PC-3 (cell line): ENCODE measurements at regions of chr5 and their contacts with region 1.

Region 1: DNA sequence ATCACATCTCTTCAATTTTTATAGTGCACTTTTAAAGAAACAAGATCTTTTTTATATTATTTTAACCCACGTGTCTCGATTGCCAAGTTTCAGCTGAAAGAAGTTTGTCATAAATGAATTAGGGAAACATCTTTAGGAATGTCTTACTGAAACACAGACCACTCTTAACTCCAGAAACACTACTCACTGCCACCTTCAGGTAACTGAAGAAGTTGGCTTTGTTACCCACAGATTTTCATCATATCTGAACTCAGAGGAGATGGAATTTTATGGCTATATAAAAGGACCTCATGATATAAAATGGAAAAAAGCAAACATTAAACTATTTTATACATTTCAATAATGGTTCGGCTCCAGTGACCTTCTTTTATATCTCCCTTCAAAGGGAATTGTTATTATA is 158.0 kb downstream of the SEMA5A start:
- DNase-seq: peak; percentile 64
- ATAC-seq: peak; percentile 93
- H3K4me3 ChIP-seq: no peak overlapping the region
- H3K27ac ChIP-seq: no peak overlapping the region
- H3K4me1 ChIP-seq: peaks cover under 1% of the 10 kb centered on the region; the same call in 1 of the 2 replicates
- H3K27me3 ChIP-seq: no peaks in the 10 kb centered on the region
- CTCF ChIP-seq: peak; percentile 67

Region 2: GRCh38 chr5:9099689-9100088 is 288.2 kb before region 1 on chr5:
- CTCF ChIA-PET with region 1: no interaction called
- POLR2A ChIA-PET with region 1: no interaction called
- intact Hi-C with region 1: no loop called
- DNase-seq: peak; percentile 35
- ATAC-seq: no peak
- H3K4me3 ChIP-seq: no peak overlapping the region
- H3K27ac ChIP-seq: no peak overlapping the region
- H3K4me1 ChIP-seq: no peaks in the 10 kb centered on the region
- H3K27me3 ChIP-seq: no peaks in the 10 kb centered on the region
- CTCF ChIP-seq: peak; percentile 51

Region 3: GRCh38 chr5:9156282-9156681 is 231.6 kb before region 1 on chr5:
- CTCF ChIA-PET with region 1: no interaction called
- POLR2A ChIA-PET with region 1: no interaction called
- intact Hi-C with region 1: loop called (anchors 5 kb)
- DNase-seq: peak; percentile 86
- ATAC-seq: peak; percentile 87
- H3K4me3 ChIP-seq: no peak overlapping the region
- H3K27ac ChIP-seq: no peak overlapping the region
- H3K4me1 ChIP-seq: peaks cover 14% of the 10 kb centered on the region
- H3K27me3 ChIP-seq: no peaks in the 10 kb centered on the region
- CTCF ChIP-seq: peak; percentile 95

Region 4: GRCh38 chr5:9182899-9183685 is 204.8 kb before region 1 on chr5:
- CTCF ChIA-PET with region 1: no interaction called
- POLR2A ChIA-PET with region 1: no interaction called
- intact Hi-C with region 1: no loop called
- DNase-seq: no peak
- ATAC-seq: no peak
- H3K4me3 ChIP-seq: no peak overlapping the region
- H3K27ac ChIP-seq: no peak overlapping the region
- H3K4me1 ChIP-seq: peaks cover 2% of the 10 kb centered on the region; the same call in 1 of the 2 replicates
- H3K27me3 ChIP-seq: no peaks in the 10 kb centered on the region
- CTCF ChIP-seq: no peak

Region 5: GRCh38 chr5:9361835-9362234 is 26.0 kb before region 1 on chr5:
- CTCF ChIA-PET with region 1: no interaction called
- POLR2A ChIA-PET with region 1: no interaction called
- intact Hi-C with region 1: loop called (anchors 2 kb)
- DNase-seq: peak; percentile 97
- ATAC-seq: peak; percentile 74
- H3K4me3 ChIP-seq: no peak overlapping the region
- H3K27ac ChIP-seq: no peak overlapping the region
- H3K4me1 ChIP-seq: peaks cover 15% of the 10 kb centered on the region
- H3K27me3 ChIP-seq: no peaks in the 10 kb centered on the region
- CTCF ChIP-seq: peak; percentile 100

Region 6: DNA sequence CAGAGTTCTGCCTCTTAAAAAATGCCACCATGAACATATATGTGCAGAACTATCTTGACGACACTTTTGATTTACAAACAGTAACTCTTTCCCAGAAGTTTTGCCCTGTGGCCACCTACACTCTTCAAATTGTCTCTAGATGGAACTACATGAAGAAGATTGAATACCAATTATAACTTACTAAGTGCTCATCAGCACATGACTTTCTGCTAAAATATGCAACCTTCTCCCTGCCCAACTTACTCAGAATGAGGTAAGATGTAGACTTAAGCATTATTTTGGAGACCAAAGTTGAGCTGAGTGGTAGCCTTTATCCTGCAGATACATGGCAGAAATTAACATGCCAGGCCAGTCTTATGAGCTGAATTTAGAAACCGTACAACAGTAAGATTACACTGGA is 52.6 kb after region 1 on chr5:
- CTCF ChIA-PET with region 1: no interaction called
- POLR2A ChIA-PET with region 1: no interaction called
- intact Hi-C with region 1: loop called (anchors 5 kb)
- DNase-seq: peak; percentile 98
- ATAC-seq: peak; percentile 85
- H3K4me3 ChIP-seq: no peak overlapping the region; the same call in 1 of the 2 replicates
- H3K27ac ChIP-seq: peak overlapping the region; percentile 93
- H3K4me1 ChIP-seq: peaks cover 48% of the 10 kb centered on the region
- H3K27me3 ChIP-seq: no peaks in the 10 kb centered on the region
- CTCF ChIP-seq: no peak

Region 7: DNA sequence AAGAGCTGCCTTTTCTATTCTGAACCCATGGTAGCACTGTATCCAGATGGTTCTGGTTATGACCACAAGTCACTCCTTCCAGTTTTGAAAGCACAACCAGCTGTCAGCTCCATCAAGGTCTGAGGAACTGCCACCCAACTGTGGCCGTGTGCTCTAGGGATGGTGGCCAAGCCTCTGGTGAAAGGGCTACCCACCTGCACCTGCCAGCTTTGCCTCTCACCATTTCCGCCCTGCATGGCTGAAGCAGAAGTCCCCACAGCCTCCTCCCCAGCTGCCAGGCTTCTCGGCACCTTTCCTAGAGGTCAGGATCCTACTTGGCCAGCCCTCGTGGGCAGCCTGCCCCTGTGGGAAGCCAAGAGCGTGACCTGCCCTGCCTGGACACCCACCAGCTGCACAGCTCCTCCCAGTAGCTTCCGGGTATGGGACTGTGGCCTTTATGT is 141.2 kb after region 1 on chr5:
- CTCF ChIA-PET with region 1: no interaction called
- POLR2A ChIA-PET with region 1: no interaction called
- intact Hi-C with region 1: loop called (anchors 5 kb)
- DNase-seq: no peak
- ATAC-seq: 0 out of 2 replicates have a peak, but pooled peaks have one; percentile 15
- H3K4me3 ChIP-seq: no peak overlapping the region
- H3K27ac ChIP-seq: no peak overlapping the region
- H3K4me1 ChIP-seq: peaks cover 6% of the 10 kb centered on the region; the same call in 1 of the 2 replicates
- H3K27me3 ChIP-seq: no peaks in the 10 kb centered on the region
- CTCF ChIP-seq: no peak